ENCODE measurements at regions of chr7 and their contacts with region 1.

Region 1: DNA sequence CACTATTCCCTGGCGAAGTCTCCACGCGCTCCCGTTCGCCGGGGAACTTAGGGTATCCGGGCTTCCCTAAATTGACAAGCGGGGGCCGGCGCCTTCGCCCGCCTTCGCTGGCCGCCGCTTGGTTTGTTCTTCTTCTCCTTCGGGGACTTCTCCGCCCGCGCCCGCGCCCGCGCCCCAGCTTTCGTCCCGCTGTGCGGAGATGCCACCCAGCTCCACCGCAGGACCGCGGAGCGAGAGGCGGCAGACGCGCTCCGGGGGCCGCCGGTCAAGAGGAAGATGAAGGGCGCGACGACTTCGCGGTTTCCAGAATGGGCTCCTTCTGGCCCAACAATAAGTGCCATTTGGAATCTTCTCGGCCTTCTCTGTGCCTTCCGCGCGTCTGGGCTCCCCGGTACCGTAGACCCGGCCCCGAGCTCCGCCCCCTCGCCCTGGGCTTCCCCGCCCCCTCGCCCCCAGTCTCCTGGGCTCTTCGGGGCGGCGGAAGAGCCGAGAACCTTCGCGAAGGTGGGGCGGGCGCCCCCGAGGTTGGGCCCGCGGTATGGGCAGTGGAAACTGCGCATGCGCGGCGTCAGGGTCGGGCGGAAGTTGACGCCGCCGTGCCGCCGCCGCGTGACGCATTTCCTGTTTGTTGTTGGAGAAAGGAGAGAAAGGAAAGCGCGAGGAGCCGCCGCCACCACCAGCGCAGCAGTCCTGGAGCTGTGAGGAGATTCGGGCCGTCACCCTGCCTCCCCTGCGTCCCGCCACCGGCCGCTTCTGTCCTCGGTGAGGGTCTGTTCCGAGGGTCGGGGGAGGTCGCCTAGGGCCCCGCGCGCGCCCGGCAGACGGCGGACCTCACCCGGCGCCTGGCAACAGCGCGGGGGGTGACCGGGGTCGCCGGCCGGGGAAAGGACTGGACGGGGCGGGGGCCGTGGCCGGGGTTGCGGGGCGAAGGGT is at the start of gene DNAJB6:
- DNase-seq: peak; percentile 90 to 91
- ATAC-seq: peak; percentile 79 to 85
- H3K4me3 ChIP-seq: peak within 1 kb of the TSS; percentile 83 to 99 (median 84)
- H3K27ac ChIP-seq: peak within 1 kb of the TSS; percentile 96 to 100 (median 96)
- H3K4me1 ChIP-seq: peaks cover 35 to 38% of the 10 kb centered on the region in 2 donors
- H3K27me3 ChIP-seq: no peaks in the 10 kb centered on the region
- CTCF ChIP-seq: no peak
- POLR2A ChIP-seq: peak; percentile 99
- total RNA-seq, gene DNAJB6: 130 to 269 (median 188) TPM

Region 2: GRCh38 chr7:156892821-156893706 is 443.6 kb before region 1 on chr7 and contains the start of gene LMBR1:
- in situ Hi-C with region 1: no loop called
- intact Hi-C with region 1: loop called (anchors 5 kb)
- DNase-seq: peak; percentile 92 to 96
- ATAC-seq: peak; percentile 89 to 90
- H3K4me3 ChIP-seq: peak within 1 kb of the TSS; percentile 82 to 97 (median 87)
- H3K27ac ChIP-seq: peak within 1 kb of the TSS; percentile 90 to 99 (median 96)
- H3K4me1 ChIP-seq: peaks cover 27 to 47% of the 10 kb centered on the region in 2 donors
- H3K27me3 ChIP-seq: no peaks in the 10 kb centered on the region
- CTCF ChIP-seq: peak; percentile 79 to 94 (median 89)
- POLR2A ChIP-seq: peak; percentile 75 to 83
- total RNA-seq, gene LMBR1: 27.9 to 87.0 (median 35.3) TPM

Region 3: DNA sequence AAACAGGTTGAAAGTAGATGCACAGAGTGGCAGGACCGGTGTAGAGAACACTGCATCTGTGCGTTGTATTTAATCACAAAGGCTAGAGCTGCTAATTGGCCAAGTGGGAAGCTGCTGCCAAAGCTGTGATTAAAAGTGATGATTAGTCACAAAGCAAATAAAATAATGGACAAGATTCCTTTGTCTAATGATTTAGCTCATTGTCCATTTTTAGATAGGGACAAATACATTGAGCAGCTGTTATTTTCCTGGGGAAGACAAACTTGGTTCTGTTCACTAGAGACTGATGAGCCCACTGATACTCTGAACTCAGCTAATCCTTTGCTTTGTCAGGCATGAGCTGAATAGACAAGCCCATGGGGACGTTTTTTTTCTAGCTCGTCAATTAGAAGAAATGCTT is 178.2 kb before region 1 on chr7:
- in situ Hi-C with region 1: no loop called
- intact Hi-C with region 1: loop called (anchors 5 kb)
- DNase-seq: no peak
- ATAC-seq: no peak
- H3K4me3 ChIP-seq: no peak overlapping the region
- H3K27ac ChIP-seq: peak overlapping the region; percentile 69 to 79 (median 75)
- H3K4me1 ChIP-seq: peaks cover 55 to 56% of the 10 kb centered on the region in 2 donors
- H3K27me3 ChIP-seq: no peaks in the 10 kb centered on the region
- CTCF ChIP-seq: no peak
- POLR2A ChIP-seq: no peak

Region 4: DNA sequence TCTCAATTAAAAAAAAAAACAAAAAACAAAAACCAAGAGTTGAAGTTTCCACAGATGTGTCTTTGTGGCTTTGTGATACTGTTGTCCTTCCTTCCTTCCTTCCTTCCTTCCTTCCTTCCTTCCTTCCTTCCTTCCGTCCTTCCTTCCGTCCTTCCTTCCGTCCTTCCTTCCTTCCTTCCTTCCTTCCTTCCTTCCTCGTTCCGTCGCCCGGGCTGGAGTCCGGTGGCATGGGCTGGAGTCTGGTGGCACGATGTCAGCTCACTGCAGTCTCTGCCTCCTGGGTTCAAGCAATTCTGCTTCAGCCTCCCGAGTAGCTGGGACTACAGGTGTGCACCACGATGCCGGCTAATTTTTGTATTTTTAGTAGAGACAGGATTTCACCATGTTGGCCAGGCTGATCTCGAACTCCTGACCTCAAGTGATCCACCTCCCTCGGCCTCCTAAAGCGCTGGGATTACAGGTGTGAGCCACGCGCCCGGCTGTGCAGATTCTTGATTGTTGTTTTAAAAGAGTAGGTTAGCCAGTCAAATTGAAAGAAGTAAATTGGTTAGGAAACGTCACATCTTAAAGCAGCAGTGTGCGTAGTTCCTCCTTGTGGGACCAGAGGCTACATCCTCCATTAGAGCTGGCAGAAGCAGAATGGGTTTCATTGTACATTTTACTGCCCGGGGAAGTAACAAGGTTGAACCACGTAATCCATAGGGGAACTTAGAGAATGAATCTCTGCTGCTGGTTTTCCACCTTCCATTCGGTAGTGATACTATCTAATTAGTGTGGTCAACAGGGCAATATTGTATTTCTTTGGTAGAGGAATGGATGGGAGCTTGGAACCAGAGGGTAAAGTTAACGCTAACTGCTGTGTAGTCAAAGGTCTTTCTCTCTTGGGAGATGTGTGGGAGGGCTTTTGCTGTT is 20.7 kb after region 1 on chr7:
- in situ Hi-C with region 1: no loop called
- intact Hi-C with region 1: loop called (anchors 2 kb)
- DNase-seq: peak in 1 of 2 donors; percentile 11
- ATAC-seq: no peak
- H3K4me3 ChIP-seq: no peak overlapping the region
- H3K27ac ChIP-seq: peak overlapping the region; percentile 96 to 100 (median 96)
- H3K4me1 ChIP-seq: peaks cover 91 to 99% of the 10 kb centered on the region in 2 donors
- H3K27me3 ChIP-seq: no peaks in the 10 kb centered on the region
- CTCF ChIP-seq: no peak
- POLR2A ChIP-seq: no peak

Region 5: DNA sequence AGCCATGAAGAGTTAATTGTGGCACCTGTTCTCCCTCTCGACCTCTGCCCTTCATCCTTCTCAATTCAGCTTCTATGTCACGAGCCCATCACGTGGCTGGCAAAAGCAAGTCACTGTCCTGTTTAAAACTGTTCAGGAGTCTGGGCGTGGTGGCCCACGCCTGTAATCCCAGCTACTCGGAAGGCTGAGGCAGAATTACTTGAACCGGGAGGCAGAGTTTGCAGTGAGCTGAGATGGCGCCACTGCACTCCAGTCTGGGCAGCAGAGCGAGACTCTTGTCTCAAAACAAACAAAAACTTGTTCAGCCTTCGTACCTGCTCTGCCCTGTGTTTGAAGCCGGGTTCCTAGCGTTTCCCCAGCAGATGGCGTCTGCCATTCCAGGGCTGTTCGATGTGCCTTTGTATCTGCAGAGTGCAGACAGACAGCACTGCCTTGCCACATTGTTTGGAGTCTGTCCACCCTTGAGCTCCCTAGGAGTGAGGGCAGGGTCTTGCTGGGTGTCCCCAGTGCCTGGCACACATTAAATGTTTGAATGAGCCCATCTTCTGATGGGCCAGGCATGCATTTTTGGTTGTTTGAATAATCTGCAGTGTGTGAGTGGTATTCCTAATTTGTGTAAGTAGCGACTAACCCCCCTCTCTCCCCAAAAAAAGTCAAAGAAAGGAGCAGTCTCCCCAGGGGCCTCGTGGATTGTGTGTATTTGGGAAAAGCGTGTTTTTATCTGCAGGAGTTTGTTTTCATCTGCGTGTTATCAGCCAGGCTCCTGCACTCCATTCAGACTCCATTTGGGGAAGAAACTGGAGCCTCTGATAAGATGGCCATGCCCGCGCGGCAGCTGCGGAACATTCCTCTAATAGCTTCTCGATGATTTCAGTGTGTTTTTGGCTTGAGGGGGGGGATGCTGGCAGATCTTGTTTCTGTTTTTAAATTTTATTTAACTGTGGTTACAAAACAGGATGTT is 61.4 kb after region 1 on chr7:
- in situ Hi-C with region 1: loop called in 1 of 4 experiments (anchors 10 kb)
- intact Hi-C with region 1: no loop called
- DNase-seq: peak; percentile 74 to 90
- ATAC-seq: peak; percentile 77 to 82
- H3K4me3 ChIP-seq: peak overlapping the region; percentile 4 to 47 (median 23)
- H3K27ac ChIP-seq: peak overlapping the region; percentile 80 to 94 (median 88)
- H3K4me1 ChIP-seq: peaks cover 35 to 72% of the 10 kb centered on the region in 2 donors
- H3K27me3 ChIP-seq: no peaks in the 10 kb centered on the region
- CTCF ChIP-seq: peak in 4 of 5 experiments; percentile 22 to 45 (median 30)
- POLR2A ChIP-seq: peak; percentile 37 to 49